ENCODE measurements at regions of chr4 and their contacts with region 1.

Region 1: DNA sequence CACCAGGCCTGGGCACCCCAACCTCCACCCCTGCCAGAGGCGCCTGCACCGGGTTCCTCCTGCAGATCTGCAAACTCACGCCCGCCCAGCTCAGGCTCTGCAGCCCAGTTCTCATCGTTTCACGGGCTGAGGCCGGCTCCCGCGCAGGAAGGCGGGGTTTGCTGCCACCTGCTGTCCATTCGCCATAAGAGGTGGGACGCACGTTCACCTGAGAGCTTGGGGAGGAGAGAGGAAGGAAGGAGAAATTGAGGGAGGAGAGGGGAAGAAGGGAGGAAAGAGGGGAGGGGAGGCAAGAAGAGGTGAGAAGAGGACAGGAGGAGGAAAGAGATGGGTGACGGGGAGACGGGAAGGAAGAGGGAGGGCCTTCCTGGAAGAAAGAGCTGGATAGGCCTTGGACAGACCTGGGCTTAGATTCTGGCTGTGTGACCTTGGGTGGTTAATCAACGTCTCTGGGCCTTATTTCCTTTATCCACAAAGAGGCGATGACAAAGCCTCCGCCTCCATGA is 114.5 kb downstream of the ADRA2C start:
- DNase-seq: peak; percentile 44 to 84
- H3K4me3 ChIP-seq: no peak overlapping the region
- H3K4me1 ChIP-seq: no peaks in the 10 kb centered on the region
- H3K27me3 ChIP-seq: peaks cover 24% of the 10 kb centered on the region

Region 2: GRCh38 chr4:3480528-3481112 is 400.0 kb before region 1 on chr4:
- in situ Hi-C with region 1: loop called (anchors 10 kb)
- DNase-seq: peak; percentile 66 to 88
- H3K4me3 ChIP-seq: no peak overlapping the region
- H3K4me1 ChIP-seq: no peaks in the 10 kb centered on the region
- H3K27me3 ChIP-seq: peaks cover 40% of the 10 kb centered on the region

Region 3: GRCh38 chr4:3572363-3572762 is 308.3 kb before region 1 on chr4:
- in situ Hi-C with region 1: loop called (anchors 25 kb)
- DNase-seq: no peak
- H3K4me3 ChIP-seq: no peak overlapping the region
- H3K4me1 ChIP-seq: no peaks in the 10 kb centered on the region
- H3K27me3 ChIP-seq: no peaks in the 10 kb centered on the region

Region 4: GRCh38 chr4:4673070-4673469 is 792.4 kb after region 1 on chr4:
- in situ Hi-C with region 1: no loop called
- DNase-seq: peak; percentile 71 to 98
- H3K4me3 ChIP-seq: no peak overlapping the region
- H3K4me1 ChIP-seq: peaks cover 18% of the 10 kb centered on the region
- H3K27me3 ChIP-seq: no peaks in the 10 kb centered on the region

Measured in HAP-1 (cell line).